Activated T-helper 2 cell treated with anti-CD3 and anti-CD28 coated beads, Interferon-gamma antibody, Interleukin-2, Interleukin-4, amounts not matched to agents 10 μg/mL and 5 μg/mL and 100 μg/mL, durations not matched to agents 14 hours and 24 hours and 36 hours (primary cell): ENCODE measurements at regions of chr12 and their contacts with region 1.

Region 1: DNA sequence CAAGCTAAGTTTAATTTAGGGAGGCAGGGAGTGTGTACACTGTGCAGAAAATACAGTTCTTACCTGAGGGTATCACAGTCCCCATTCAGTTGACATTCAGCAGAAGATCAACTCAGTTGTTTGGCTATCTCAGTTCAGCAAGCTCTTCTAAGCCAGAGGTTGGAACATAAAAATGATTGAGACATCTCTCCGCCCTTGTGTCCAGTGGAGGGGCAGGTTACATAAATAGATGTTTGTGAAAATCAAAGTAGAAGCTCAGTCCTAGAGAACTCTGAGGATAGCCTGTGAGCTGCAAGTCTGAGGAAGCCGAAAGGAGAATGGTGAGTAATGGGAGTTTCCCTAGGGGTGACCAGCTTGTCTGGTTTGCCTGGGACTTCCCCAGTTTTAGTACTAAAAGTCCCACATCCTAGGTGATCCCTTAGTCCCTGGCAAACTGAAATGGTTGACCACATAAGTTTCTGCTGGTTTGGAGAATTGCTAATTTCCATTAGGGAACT is 251.4 kb upstream of the ATP2B1 start:
- DNase-seq: no peak
- H3K4me3 Mint-ChIP-seq: no peak overlapping the region
- H3K27ac Mint-ChIP-seq: no peak overlapping the region
- H3K4me1 Mint-ChIP-seq: peaks cover 17% of the 10 kb centered on the region
- H3K27me3 Mint-ChIP-seq: peaks cover 17% of the 10 kb centered on the region

Region 2: DNA sequence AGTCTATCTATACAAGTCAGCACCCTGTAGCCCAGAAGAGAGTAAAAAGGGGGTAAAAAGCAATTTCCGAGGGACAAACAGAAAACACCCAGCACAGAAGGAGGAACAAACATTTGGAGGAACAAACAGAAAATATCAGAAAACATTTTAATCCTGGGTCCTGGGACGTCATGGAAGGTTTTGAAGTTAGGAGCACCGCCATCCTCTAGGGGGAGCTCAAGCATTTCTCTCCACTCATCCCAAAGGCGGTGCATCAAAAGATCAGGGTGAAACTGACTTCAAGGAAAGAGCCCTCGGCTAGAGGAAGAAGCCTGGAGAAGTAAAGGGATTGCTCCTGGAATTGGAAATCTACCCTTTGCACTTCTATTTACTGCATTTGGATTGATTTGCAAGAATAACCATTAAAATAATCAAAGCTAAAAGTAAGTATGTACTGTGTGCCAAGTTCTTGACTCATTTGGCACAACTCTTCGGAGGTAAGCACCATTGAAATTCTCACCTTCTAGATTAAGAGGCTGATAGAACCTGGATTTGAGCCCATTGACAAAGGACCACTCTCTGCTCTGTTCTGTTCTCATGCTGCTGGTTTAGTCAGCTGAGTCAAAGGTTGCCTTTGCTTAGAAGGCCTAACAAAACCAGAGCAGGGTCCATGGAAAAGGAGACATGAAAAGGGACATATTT is 417.0 kb before region 1 on chr12:
- intact Hi-C with region 1: loop called (anchors 5 kb)
- DNase-seq: peak; percentile 35
- H3K4me3 Mint-ChIP-seq: no peak overlapping the region
- H3K27ac Mint-ChIP-seq: no peak overlapping the region
- H3K4me1 Mint-ChIP-seq: peaks cover 9% of the 10 kb centered on the region
- H3K27me3 Mint-ChIP-seq: no peaks in the 10 kb centered on the region

Region 3: DNA sequence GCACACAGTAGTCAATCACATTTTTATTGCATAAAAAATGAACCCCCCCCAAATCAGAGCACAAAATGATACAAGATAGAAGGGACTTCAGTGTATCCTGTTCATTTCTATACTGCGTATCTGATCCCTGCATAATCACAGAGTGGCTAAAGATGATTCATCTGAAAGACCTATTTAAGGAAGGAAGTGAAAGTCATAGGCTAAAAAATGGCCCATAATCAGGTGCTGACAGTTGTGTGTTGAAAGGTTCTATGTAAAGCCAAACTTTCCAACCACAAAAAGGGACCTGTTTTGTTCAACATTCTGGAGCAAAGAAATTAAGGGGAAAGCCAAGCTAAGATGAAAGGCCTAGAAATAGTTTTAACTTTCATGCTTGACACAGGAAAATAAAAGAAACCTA is 103.6 kb before region 1 on chr12:
- intact Hi-C with region 1: loop called (anchors 5 kb)
- DNase-seq: no peak
- H3K4me3 Mint-ChIP-seq: no peak overlapping the region
- H3K27ac Mint-ChIP-seq: no peak overlapping the region
- H3K4me1 Mint-ChIP-seq: peaks cover 33% of the 10 kb centered on the region
- H3K27me3 Mint-ChIP-seq: no peaks in the 10 kb centered on the region

Region 4: GRCh38 chr12:89882050-89882449 is 78.0 kb before region 1 on chr12:
- intact Hi-C with region 1: loop called (anchors 1 kb)
- DNase-seq: no peak
- H3K4me3 Mint-ChIP-seq: no peak overlapping the region
- H3K27ac Mint-ChIP-seq: no peak overlapping the region
- H3K4me1 Mint-ChIP-seq: peaks cover 36% of the 10 kb centered on the region
- H3K27me3 Mint-ChIP-seq: peaks cover 13% of the 10 kb centered on the region

Region 5: DNA sequence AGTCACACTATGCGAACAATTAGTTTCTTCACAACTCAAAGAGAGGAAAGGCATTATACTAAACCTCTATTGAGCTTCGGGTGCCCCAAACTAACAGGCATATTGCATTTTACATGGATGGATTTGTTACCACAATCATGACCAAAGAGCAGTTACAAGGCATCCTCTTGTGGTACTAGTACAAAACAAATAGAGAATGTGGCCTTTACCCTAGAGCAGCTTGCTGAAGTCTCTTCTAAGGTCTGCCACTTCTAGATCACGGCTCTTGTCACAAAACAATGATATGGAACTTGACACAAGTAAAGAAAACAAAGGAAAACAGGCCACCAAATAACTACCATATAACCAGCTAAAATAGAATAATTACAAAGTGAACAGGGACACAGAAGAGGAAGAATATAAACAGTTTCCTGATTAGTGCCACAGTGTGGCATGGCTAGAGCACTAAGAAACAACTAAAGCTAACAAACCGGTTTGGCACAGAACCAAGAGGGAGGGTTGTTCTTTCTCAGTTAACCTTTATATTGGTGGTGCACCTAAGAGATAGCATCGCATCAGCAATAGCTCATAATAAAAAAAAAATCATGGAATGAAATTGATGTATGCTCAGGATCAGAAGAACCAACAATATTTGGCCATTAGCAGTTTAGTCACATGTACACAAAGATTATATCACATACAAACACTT is 41.7 kb before region 1 on chr12:
- intact Hi-C with region 1: no loop called
- DNase-seq: no peak
- H3K4me3 Mint-ChIP-seq: no peak overlapping the region
- H3K27ac Mint-ChIP-seq: no peak overlapping the region
- H3K4me1 Mint-ChIP-seq: no peaks in the 10 kb centered on the region
- H3K27me3 Mint-ChIP-seq: peaks cover 7% of the 10 kb centered on the region

Region 6: GRCh38 chr12:90042920-90043641 is 83.0 kb after region 1 on chr12:
- intact Hi-C with region 1: loop called (anchors 5 kb)
- DNase-seq: no peak
- H3K4me3 Mint-ChIP-seq: no peak overlapping the region
- H3K27ac Mint-ChIP-seq: no peak overlapping the region
- H3K4me1 Mint-ChIP-seq: peaks cover 14% of the 10 kb centered on the region
- H3K27me3 Mint-ChIP-seq: no peaks in the 10 kb centered on the region